ENCODE measurements at regions of chr13 and their contacts with region 1.

Region 1: GRCh38 chr13:44969551-44970484 is 19.5 kb downstream of the NUFIP1 start:
- DNase-seq: peak in 1 of 7 donors; percentile 33
- H3K4me3 ChIP-seq: no peak overlapping the region
- H3K27ac ChIP-seq: no peak overlapping the region
- H3K4me1 ChIP-seq: peaks cover 13 to 26% of the 10 kb centered on the region in 2 donors
- H3K27me3 ChIP-seq: no peaks in the 10 kb centered on the region
- CTCF ChIP-seq: peak; percentile 70 to 88 (median 84)
- POLR2A ChIP-seq: no peak

Region 2: GRCh38 chr13:44484562-44485138 is 485.2 kb before region 1 on chr13:
- intact Hi-C with region 1: loop called (anchors 5 to 10 kb)
- DNase-seq: no peak
- H3K4me3 ChIP-seq: peak overlapping the region in 1 of 4 donors; percentile 6
- H3K27ac ChIP-seq: no peak overlapping the region
- H3K4me1 ChIP-seq: peaks cover 0 to 16% of the 10 kb centered on the region in 2 donors
- H3K27me3 ChIP-seq: no peaks in the 10 kb centered on the region
- CTCF ChIP-seq: no peak
- POLR2A ChIP-seq: no peak

Region 3: DNA sequence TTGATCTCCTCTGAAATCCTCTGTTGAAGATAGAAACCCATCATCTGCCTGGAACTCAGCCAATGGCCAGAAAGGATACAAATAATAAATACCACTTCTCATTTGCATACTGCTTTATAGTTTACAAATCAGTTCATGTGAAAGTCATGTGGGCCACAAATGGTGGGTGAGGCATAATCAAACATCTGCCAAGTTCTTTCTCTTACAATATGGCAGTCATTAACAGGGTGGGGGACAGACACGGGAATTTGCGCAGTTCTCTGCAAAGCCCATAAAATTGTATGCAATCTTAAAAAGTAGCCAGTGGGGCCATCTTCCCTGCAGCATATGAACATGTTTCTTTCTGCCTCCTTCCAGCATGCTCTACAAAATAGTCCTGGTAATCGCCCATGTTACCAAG is 40.1 kb before region 1 on chr13:
- intact Hi-C with region 1: loop called in 1 of 2 experiments (anchors 5 kb)
- DNase-seq: no peak
- H3K4me3 ChIP-seq: no peak overlapping the region
- H3K27ac ChIP-seq: no peak overlapping the region
- H3K4me1 ChIP-seq: peaks cover 0 to 52% of the 10 kb centered on the region in 2 donors
- H3K27me3 ChIP-seq: no peaks in the 10 kb centered on the region
- CTCF ChIP-seq: no peak
- POLR2A ChIP-seq: no peak

Region 4: DNA sequence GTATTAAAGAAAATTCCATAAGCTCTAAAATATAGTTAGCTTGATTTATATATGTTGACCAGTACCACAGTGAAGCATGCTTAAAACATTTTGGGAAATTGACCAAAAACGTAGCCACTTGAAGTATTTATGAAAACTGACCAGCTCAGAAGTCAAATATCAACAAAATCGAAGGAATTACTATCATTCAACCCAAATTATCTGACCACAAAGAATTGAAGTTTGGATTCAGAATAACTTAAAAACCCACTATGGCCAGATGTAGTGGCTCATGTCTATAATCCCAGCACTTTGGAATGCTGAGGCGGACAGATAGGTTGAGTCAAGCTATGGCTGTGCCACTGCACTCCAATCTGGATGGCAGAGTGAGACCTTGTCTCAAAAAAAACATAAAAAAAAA is 51.4 kb after region 1 on chr13:
- intact Hi-C with region 1: no loop called
- DNase-seq: no peak
- H3K4me3 ChIP-seq: no peak overlapping the region
- H3K27ac ChIP-seq: no peak overlapping the region
- H3K4me1 ChIP-seq: no peaks in the 10 kb centered on the region
- H3K27me3 ChIP-seq: no peaks in the 10 kb centered on the region
- CTCF ChIP-seq: no peak
- POLR2A ChIP-seq: no peak

Region 5: DNA sequence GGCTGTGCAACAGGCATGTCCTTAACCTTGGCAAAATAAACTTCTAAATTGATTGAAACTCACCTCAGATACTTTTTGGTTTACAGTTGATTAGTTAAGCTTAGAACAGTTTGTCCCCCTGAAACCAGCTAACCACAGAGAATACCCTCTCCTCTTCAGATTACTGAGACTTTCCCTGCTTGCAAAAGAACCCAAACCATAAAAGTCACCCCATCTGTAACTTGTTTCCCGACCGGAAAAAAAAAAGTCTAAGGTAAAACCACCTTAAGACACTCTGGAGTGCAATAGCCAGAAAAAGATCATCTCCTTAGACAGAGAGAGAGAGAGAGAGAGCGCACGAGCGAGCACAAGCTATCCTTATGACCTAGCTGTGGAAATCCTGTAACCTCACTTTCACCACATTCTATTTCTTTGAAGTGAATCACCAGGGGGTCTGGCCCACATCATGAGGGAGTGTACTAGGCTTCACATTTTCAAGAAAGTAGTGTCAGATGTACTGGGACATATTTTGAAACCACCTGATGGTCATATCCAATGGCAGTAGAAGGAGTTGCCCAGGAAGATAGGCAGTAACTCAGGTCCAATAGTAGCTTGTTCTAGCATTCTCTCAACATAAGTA is 139.4 kb after region 1 on chr13:
- intact Hi-C with region 1: no loop called
- DNase-seq: no peak
- H3K4me3 ChIP-seq: no peak overlapping the region
- H3K27ac ChIP-seq: no peak overlapping the region
- H3K4me1 ChIP-seq: no peaks in the 10 kb centered on the region
- H3K27me3 ChIP-seq: no peaks in the 10 kb centered on the region
- CTCF ChIP-seq: no peak
- POLR2A ChIP-seq: no peak

Region 6: GRCh38 chr13:45705918-45706593 is 736.2 kb after region 1 on chr13:
- intact Hi-C with region 1: no loop called
- DNase-seq: no peak
- H3K4me3 ChIP-seq: no peak overlapping the region
- H3K27ac ChIP-seq: no peak overlapping the region
- H3K4me1 ChIP-seq: no peaks in the 10 kb centered on the region
- H3K27me3 ChIP-seq: no peaks in the 10 kb centered on the region
- CTCF ChIP-seq: no peak
- POLR2A ChIP-seq: no peak

Measured in adrenal gland (tissue), 19 donors.